Activated B cell treated with CpG ODN at 0.5 μM for 24 hours (primary cell): ENCODE measurements at regions of chr2 and their contacts with region 1.

Region 1: DNA sequence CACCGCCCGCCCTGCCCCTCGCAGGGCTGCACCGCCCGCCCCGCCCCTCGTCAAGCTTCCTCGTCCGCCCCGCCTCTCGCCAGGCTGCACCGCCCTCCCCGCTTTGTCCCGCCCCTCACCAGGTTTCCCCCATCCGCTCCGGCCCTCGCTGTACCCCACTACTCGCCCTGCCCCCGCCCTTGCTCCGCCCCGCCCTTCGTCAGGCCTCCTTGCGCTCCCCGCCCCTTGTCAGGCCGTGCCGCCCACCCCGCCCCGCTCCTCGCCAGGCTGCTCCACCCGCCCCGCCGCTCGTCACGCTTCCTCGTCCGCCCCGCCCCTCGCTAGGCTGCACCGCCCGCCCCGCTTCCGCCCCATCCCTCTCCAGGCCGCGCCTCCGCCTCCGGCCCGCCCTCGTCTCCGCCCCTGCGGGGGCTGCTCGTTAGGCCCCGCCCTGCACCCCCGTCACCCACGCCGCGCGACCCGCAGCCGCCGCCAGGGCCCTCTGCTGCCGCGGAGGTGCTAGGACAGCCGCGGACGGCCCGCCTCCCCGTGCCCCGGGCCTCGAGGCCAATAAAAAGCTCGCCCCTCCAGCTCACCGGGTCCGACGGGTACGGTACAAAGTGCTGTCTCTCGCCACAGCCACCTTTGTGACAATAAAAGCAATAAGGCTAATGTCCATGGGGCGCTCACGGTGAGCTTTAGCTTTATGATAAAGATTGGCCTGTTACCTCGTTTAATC is 574 bp upstream of the DNPEP start:
- DNase-seq: peak; percentile 99
- ATAC-seq: peak; percentile 79
- H3K4me3 Mint-ChIP-seq: peak overlapping the region; percentile 71
- H3K27ac Mint-ChIP-seq: peak overlapping the region; percentile 84
- H3K4me1 Mint-ChIP-seq: peaks cover 16% of the 10 kb centered on the region
- H3K27me3 Mint-ChIP-seq: peaks cover 4% of the 10 kb centered on the region
- CTCF ChIP-seq: no peak

Region 2: GRCh38 chr2:218568190-218569037 is 819.9 kb before region 1 on chr2 and contains the starts of genes CNOT9 and USP37:
- CTCF ChIA-PET with region 1: no interaction called
- POLR2A ChIA-PET with region 1: interaction called, 3 read pairs
- intact Hi-C with region 1: loop called (anchors 5 kb)
- DNase-seq: peak; percentile 100
- ATAC-seq: peak; percentile 92
- H3K4me3 Mint-ChIP-seq: peak within 1 kb of the TSS; percentile 97
- H3K27ac Mint-ChIP-seq: peak within 1 kb of the TSS; percentile 99
- H3K4me1 Mint-ChIP-seq: peaks cover 45% of the 10 kb centered on the region
- H3K27me3 Mint-ChIP-seq: no peaks in the 10 kb centered on the region
- CTCF ChIP-seq: no peak
- total RNA-seq, gene CNOT9: 60.5 and 74.4 TPM in 2 replicates
- total RNA-seq, gene USP37: 14.3 and 23.1 TPM in 2 replicates

Region 3: DNA sequence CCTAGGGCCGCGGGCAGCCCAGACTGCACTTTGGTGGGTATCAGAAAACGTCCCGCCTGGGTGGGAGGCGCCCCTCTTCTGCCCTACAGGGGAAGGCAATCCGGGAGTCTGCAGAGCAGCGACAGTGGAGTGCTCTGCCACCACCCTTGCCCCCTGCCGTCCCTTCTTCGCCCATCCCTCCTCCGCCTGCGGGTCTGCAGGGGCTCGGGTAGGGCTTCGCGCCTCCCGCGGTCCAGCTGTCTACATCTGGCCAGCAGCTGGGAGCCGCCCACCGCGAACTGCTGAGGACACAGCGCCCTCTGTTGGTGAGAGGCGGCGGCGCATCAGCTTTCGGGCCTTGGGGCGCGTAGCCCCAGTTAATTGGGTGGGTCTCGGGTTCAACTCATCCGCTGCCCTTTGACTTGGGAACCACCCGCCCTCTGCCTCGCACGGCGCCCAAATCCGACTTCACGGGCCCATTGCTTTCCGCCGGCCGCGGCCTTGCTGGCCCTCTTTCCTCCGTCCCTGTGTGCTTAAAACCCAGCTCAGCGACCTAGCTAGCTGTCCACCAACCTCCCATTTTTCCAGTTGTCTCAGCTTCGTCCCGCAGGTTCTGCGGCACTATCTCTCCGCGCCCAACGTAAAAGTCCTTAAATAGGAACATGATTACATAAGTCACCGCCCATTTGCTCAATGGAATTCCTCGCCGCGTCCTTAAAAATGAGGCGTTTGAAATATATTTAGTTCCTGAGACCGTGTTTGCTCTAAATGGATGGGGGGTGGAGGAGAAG is 490.0 kb before region 1 on chr2:
- CTCF ChIA-PET with region 1: no interaction called
- POLR2A ChIA-PET with region 1: interaction called, 7 read pairs
- intact Hi-C with region 1: loop called (anchors 5 kb)
- DNase-seq: peak; percentile 88
- ATAC-seq: peak; percentile 22
- H3K4me3 Mint-ChIP-seq: peak overlapping the region; percentile 85
- H3K27ac Mint-ChIP-seq: peak overlapping the region; percentile 84
- H3K4me1 Mint-ChIP-seq: peaks cover 47% of the 10 kb centered on the region
- H3K27me3 Mint-ChIP-seq: peaks cover 22% of the 10 kb centered on the region
- CTCF ChIP-seq: peak; percentile 97

Region 4: GRCh38 chr2:219206442-219207253 is 181.6 kb before region 1 on chr2 and contains the start of gene ZFAND2B:
- CTCF ChIA-PET with region 1: no interaction called
- POLR2A ChIA-PET with region 1: interaction called, 14 read pairs
- intact Hi-C with region 1: loop called (anchors 1 kb)
- DNase-seq: peak; percentile 99
- ATAC-seq: peak; percentile 93
- H3K4me3 Mint-ChIP-seq: peak within 1 kb of the TSS; percentile 88
- H3K27ac Mint-ChIP-seq: peak within 1 kb of the TSS; percentile 95
- H3K4me1 Mint-ChIP-seq: peaks cover 26% of the 10 kb centered on the region
- H3K27me3 Mint-ChIP-seq: no peaks in the 10 kb centered on the region
- CTCF ChIP-seq: no peak
- total RNA-seq, gene ZFAND2B: 39.9 and 47.2 TPM in 2 replicates

Region 5: DNA sequence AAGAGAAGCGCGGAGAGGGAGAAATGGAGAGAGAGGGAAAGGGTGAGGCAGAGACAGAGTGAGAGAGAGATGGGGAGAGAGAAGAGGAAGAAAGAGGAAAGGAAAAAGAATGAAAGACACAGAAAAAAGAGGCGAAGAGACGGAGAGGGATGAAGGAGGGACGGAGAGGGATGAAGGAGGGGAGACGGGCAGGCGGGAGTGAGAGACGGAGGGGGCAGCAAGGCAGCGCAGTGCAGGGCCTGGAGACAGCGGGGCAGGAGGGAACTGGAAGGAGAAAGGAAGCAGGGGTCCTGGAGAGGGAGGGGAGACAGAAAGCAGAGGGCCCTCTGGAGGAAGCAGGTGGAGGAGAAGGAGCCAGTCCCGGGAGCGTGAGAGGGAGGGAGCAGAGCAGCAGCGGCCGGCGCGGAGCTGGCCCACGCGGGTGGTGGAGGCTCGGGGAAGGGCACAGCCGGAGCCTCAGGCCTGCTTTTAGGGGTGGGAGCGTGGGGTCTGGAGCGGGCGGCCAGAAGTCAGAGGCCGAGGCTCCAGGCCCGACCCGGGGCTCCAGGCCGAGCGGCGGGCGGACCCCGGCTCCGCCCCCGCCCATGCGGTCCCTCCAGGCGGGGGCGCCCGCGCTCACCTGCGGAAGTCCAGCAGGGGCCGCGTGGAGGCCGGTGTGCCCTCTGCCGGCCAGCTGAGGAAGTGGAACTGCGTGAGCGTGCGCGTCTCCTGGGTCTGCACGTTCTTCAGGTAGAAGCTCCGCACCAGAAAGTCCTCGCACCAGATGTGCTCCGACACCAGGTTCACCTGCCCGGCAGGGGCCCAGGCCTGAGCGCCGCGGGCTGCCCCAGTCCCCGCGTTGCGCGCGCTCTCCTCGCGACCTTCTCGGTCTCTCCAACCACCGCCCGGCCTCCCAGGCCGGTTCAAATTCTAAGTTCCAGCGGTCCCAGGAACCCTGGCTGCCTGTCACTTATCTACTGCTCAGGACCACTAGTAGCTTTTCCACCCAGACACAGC is 93.6 kb before region 1 on chr2:
- CTCF ChIA-PET with region 1: interaction called, 3 read pairs
- POLR2A ChIA-PET with region 1: interaction called, 6 read pairs
- intact Hi-C with region 1: loop called (anchors 1 kb)
- DNase-seq: peak; percentile 91
- ATAC-seq: peak; percentile 95
- H3K4me3 Mint-ChIP-seq: peak overlapping the region; percentile 78
- H3K27ac Mint-ChIP-seq: peak overlapping the region; percentile 65
- H3K4me1 Mint-ChIP-seq: peaks cover 24% of the 10 kb centered on the region
- H3K27me3 Mint-ChIP-seq: peaks cover 6% of the 10 kb centered on the region
- CTCF ChIP-seq: peak; percentile 64

Region 6: GRCh38 chr2:219417374-219417773 is 29.1 kb after region 1 on chr2:
- CTCF ChIA-PET with region 1: no interaction called
- POLR2A ChIA-PET with region 1: no interaction called
- intact Hi-C with region 1: no loop called
- DNase-seq: no peak
- ATAC-seq: no peak
- H3K4me3 Mint-ChIP-seq: no peak overlapping the region
- H3K27ac Mint-ChIP-seq: no peak overlapping the region
- H3K4me1 Mint-ChIP-seq: no peaks in the 10 kb centered on the region
- H3K27me3 Mint-ChIP-seq: peaks cover 49% of the 10 kb centered on the region
- CTCF ChIP-seq: no peak

Region 7: DNA sequence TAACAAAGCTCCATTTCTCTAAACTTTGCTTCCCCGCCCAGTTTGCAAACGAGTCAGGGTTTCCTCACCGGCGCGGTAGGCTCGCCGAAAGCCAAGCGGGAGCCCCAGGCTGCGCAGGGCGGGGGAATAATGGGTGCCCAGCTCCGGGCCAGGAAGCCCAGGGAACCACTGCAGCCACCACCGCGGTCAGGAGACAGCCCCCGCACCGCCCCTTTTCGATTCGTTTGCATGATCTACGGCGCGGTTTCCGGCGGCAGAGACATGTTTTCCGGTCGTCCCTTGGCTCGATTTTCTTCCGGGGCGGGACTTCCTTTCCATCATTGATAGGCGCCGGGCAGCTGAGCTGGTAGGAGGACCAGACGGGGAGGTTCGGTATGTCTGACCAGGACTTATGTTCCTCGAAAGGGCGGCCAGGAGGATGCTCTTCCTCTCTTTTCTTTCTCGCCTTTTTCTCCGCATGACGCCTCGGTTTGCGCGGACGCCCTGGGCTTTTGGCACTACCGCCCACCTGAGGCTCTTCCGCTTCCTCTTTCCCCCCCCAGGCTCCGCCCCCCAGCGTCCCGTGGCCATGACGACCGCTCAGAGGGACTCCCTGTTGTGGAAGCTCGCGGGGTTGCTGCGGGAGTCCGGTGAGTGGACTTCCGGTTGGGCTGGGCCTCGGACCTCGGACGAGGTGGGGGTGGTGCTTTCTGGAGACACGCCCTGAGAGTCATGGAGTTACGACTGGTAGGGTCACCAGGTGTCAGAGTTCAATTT is 209.4 kb after region 1 on chr2 and contains the start of gene STK11IP:
- CTCF ChIA-PET with region 1: no interaction called
- POLR2A ChIA-PET with region 1: interaction called, 9 read pairs
- intact Hi-C with region 1: loop called (anchors 1 kb)
- DNase-seq: peak; percentile 83
- ATAC-seq: peak; percentile 91
- H3K4me3 Mint-ChIP-seq: peak within 1 kb of the TSS; percentile 96
- H3K27ac Mint-ChIP-seq: peak within 1 kb of the TSS; percentile 97
- H3K4me1 Mint-ChIP-seq: peaks cover 23% of the 10 kb centered on the region
- H3K27me3 Mint-ChIP-seq: peaks cover 13% of the 10 kb centered on the region
- CTCF ChIP-seq: no peak
- total RNA-seq, gene STK11IP: 43.3 and 53.6 TPM in 2 replicates